Dorsolateral prefrontal cortex (tissue), 120 donors: ENCODE measurements at regions of chr3 and their contacts with region 1.

Region 1: GRCh38 chr3:48847504-48848423 is at the start of gene PRKAR2A:
- DNase-seq: peak; percentile 78 to 96 (median 88)
- H3K4me3 ChIP-seq: peak within 1 kb of the TSS; percentile 49 to 99 (median 93)
- H3K27ac ChIP-seq: peak within 1 kb of the TSS; percentile 77 to 97 (median 94)
- H3K27me3 ChIP-seq: no peaks in the 10 kb centered on the region
- CTCF ChIP-seq: peak in 28 of 56 donors; percentile 5 to 53 (median 29)
- total RNA-seq, gene PRKAR2A: 19.8 to 50.2 (median 30.1) TPM

Region 2: GRCh38 chr3:48439820-48440589 is 407.8 kb before region 1 on chr3 and contains the starts of genes CCDC51 and TMA7:
- intact Hi-C with region 1: loop called in 1 of 2 experiments (anchors 5 kb)
- DNase-seq: peak; percentile 98 to 100 (median 99)
- H3K4me3 ChIP-seq: peak within 1 kb of the TSS; percentile 67 to 100 (median 93)
- H3K27ac ChIP-seq: peak within 1 kb of the TSS in 58 of 59 donors; percentile 48 to 95 (median 84)
- H3K27me3 ChIP-seq: no peaks in the 10 kb centered on the region
- CTCF ChIP-seq: peak in 38 of 56 donors; percentile 5 to 54 (median 22)
- total RNA-seq, gene CCDC51: 5.5 to 17.7 (median 10.0) TPM
- total RNA-seq, gene TMA7: 127 to 251 (median 193) TPM

Region 3: GRCh38 chr3:48716982-48717746 is 130.6 kb before region 1 on chr3 and contains the start of gene IP6K2:
- intact Hi-C with region 1: loop called in 1 of 2 experiments (anchors 10 kb)
- DNase-seq: peak; percentile 97 to 100 (median 98)
- H3K4me3 ChIP-seq: peak within 1 kb of the TSS; percentile 49 to 99 (median 89)
- H3K27ac ChIP-seq: peak within 1 kb of the TSS; percentile 18 to 96 (median 83)
- H3K27me3 ChIP-seq: no peaks in the 10 kb centered on the region
- CTCF ChIP-seq: peak in 30 of 56 donors; percentile 10 to 57 (median 32)
- total RNA-seq, gene IP6K2: 63.9 to 128 (median 92.9) TPM

Region 4: GRCh38 chr3:48863122-48863521 is 15.4 kb after region 1 on chr3:
- intact Hi-C with region 1: no loop called
- DNase-seq: no peak
- H3K4me3 ChIP-seq: no peak overlapping the region
- H3K27ac ChIP-seq: no peak overlapping the region
- H3K27me3 ChIP-seq: no peaks in the 10 kb centered on the region
- CTCF ChIP-seq: no peak

Region 5: DNA sequence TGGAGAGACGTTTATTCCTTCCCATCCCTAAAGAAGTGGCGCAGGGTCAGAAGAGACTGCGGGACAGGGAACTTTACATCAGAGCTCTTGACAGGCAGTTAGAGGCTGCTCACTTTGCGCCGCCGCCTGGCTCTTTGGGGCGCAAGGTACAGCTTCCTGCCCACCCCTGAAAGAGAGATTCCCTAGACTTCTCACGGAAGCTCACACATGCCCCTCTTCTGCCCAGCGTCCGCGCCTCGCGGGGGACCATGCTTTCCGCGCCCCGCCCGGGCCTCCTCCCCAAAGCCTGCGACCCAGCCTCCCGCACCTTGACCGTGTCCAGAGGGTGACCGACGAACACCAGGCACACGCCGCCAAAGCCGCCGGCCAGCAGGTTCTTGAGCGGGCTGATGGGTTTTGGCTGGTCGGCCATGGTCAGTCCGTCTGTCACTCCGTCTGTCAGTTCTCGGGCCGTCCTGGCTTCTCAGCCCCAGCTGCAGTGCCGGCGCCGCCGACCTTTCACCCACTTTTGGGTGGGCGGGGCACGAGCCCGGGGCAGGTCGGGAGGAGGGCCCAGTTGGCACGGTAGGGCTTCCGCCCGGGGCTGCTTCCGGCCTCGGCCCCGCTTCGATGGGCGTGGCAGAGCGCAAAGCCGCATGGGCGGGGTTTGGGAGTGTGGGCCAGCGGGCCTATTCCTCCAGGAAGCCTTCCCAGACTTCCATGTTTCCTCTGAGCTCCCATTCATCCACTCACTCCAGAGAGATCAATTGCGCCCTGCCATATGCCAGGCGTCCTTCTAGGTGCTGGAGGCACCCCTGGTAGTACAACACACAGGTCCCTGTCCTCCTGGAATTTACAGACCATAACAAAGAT is 50.8 kb after region 1 on chr3 and contains the start of gene SLC25A20:
- intact Hi-C with region 1: loop called in 1 of 2 experiments (anchors 5 kb)
- DNase-seq: peak; percentile 41 to 85 (median 68)
- H3K4me3 ChIP-seq: peak within 1 kb of the TSS; percentile 55 to 91 (median 76)
- H3K27ac ChIP-seq: peak within 1 kb of the TSS in 53 of 59 donors; percentile 3 to 88 (median 59)
- H3K27me3 ChIP-seq: no peaks in the 10 kb centered on the region
- CTCF ChIP-seq: peak in 10 of 56 donors; percentile 3 to 24 (median 9)
- total RNA-seq, gene SLC25A20: 6.2 to 24.2 (median 11.2) TPM

Region 6: GRCh38 chr3:49021813-49022687 is 174.3 kb after region 1 on chr3 and contains the start of gene NDUFAF3:
- intact Hi-C with region 1: loop called in 1 of 2 experiments (anchors 5 kb)
- DNase-seq: peak; percentile 85 to 95 (median 91)
- H3K4me3 ChIP-seq: peak within 1 kb of the TSS; percentile 73 to 100 (median 98)
- H3K27ac ChIP-seq: peak within 1 kb of the TSS; percentile 76 to 99 (median 97)
- H3K27me3 ChIP-seq: no peaks in the 10 kb centered on the region
- CTCF ChIP-seq: peak; percentile 80 to 99 (median 96)
- total RNA-seq, gene NDUFAF3: 57.3 to 129 (median 81.1) TPM

Region 7: DNA sequence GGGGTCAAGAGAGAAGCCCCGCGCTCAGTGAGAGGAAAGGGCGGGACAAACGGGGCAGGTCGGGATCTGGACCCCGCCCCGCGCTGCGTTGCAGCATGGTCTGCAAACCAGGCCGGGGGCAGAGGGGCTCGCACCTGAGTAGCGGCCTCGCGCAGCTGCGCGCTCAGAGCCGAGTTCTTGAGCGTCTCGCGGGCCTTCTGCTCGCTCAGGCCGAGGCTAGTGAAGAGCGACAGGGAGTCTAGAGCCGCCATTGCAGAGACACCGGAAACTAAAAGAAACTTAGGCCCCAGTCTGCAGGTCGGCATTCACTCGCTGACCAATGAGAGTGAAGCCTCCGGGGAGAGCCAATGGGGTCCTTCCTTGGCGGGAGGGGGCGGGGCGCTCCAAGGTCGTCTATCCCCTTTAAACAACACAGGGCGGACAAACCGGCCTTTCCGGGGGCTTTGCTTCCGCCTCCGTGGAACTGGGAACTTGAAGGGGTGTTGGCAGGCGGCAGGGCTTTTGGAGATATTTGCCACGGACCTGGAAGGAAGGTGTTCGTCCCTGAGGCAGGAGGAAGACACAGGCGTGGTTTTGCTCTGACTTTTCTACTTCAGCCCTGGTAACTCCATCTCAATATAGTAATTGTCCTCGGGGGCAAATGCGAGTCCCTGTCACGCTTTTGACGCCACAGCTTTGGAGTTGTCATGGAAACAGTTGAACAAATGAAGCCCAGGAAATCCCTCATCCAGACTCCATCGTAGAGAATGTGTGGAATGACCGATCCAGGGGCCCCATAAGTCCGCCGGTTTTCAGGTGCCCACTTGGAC is 256.9 kb after region 1 on chr3 and contains the start of gene QARS1:
- intact Hi-C with region 1: no loop called
- DNase-seq: peak; percentile 89 to 98 (median 96)
- H3K4me3 ChIP-seq: peak within 1 kb of the TSS; percentile 62 to 100 (median 91)
- H3K27ac ChIP-seq: peak within 1 kb of the TSS in 54 of 59 donors; percentile 15 to 91 (median 76)
- H3K27me3 ChIP-seq: no peaks in the 10 kb centered on the region
- CTCF ChIP-seq: peak in 5 of 56 donors; percentile 12 to 25 (median 23)
- total RNA-seq, gene QARS1: 56.5 to 123 (median 85.5) TPM